CD8-positive, alpha-beta T cell (primary cell): ENCODE measurements at regions of chr2 and their contacts with region 1.

Region 1: DNA sequence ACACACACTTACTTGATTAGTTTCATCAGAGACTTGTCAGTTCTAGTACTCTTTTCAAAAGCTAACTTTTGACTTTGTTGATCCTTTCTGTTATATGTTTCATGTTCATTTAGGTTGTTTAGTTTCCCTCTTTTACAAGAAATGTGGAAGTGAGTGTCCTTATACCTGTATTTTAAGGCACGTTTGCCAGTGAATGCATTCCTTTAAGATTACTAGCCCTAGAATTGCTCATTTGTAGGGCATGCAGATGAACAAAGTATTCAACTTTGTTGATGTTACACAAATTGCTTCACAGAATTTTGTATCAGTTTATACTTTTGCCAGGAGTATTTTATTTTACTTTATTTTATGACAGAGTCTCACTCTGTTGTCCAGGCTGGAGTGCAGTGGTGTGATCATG is 6.3 kb downstream of the IL1RL2 start:
- DNase-seq: no peak
- ATAC-seq: no peak
- H3K4me3 ChIP-seq: no peak overlapping the region
- H3K4me3 Mint-ChIP-seq: no peak overlapping the region
- H3K27ac ChIP-seq: no peak overlapping the region
- H3K27ac Mint-ChIP-seq: no peak overlapping the region
- H3K4me1 ChIP-seq: peaks cover 4% of the 10 kb centered on the region
- H3K4me1 Mint-ChIP-seq: peaks cover 7% of the 10 kb centered on the region
- H3K27me3 ChIP-seq: no peaks in the 10 kb centered on the region
- H3K27me3 Mint-ChIP-seq: peaks cover 9% of the 10 kb centered on the region
- CTCF ChIP-seq: no peak

Region 2: GRCh38 chr2:102208774-102209173 is 15.7 kb after region 1 on chr2:
- CTCF ChIA-PET with region 1: no interaction called
- POLR2A ChIA-PET with region 1: interaction called, 3 read pairs
- intact Hi-C with region 1: loop called in 1 of 2 experiments (anchors 1 kb)
- DNase-seq: no peak
- ATAC-seq: no peak
- H3K4me3 ChIP-seq: no peak overlapping the region
- H3K4me3 Mint-ChIP-seq: no peak overlapping the region
- H3K27ac ChIP-seq: no peak overlapping the region
- H3K27ac Mint-ChIP-seq: no peak overlapping the region
- H3K4me1 ChIP-seq: no peaks in the 10 kb centered on the region
- H3K4me1 Mint-ChIP-seq: no peaks in the 10 kb centered on the region
- H3K27me3 ChIP-seq: no peaks in the 10 kb centered on the region
- H3K27me3 Mint-ChIP-seq: no peaks in the 10 kb centered on the region
- CTCF ChIP-seq: no peak